HCT116 (cell line): ENCODE measurements at regions of chr14 and their contacts with region 1.

Region 1: DNA sequence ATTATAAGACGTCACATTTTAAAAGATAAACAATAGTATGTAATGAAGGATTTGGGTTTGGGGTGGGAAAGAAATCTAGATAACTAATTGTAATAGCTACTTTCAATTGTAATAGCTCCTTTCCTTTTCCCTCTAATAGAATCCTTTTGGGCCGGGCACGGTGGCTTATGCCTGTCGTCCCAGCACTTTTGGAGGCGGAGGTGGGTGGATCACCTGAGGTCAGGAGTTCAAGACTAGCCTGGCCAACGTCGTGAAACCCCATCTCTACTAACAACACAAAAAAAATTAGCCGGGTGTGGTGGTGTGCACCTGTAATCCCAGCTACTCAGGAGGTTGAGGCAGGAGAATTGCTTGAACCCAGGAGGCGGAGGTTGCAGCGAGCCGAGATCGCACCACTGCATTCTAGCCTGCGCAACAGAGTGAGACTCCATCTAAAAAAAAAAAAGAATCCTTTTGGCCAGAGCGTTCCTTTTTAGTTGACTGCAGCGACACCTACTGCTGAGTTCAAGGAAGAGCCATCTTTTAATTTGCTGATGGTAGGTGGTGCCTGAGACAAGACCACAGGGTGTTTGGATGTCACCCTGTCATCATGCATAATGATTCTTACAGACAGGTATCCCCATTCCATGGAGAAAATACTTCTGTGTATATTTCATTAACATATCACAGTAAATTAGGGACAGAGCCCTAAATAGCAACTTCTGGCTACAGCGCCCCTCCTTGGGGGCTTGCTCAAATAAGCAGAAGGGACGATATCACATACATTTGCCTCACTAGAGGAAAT is 79.5 kb downstream of the ARMH4 start:
- DNase-seq: peak; percentile 65
- ATAC-seq: peak; percentile 96
- H3K4me3 ChIP-seq: peak overlapping the region; percentile 18 to 32; a peak in 2 of 4 replicates
- H3K27ac ChIP-seq: no peak overlapping the region
- H3K4me1 ChIP-seq: no peaks in the 10 kb centered on the region
- H3K27me3 ChIP-seq: no peaks in the 10 kb centered on the region
- CTCF ChIP-seq: peak; percentile 63 to 73 (median 63); a peak in 5 of 6 replicates
- POLR2A ChIP-seq: no peak
- RAD21 ChIP-seq: peak; percentile 75

Region 2: DNA sequence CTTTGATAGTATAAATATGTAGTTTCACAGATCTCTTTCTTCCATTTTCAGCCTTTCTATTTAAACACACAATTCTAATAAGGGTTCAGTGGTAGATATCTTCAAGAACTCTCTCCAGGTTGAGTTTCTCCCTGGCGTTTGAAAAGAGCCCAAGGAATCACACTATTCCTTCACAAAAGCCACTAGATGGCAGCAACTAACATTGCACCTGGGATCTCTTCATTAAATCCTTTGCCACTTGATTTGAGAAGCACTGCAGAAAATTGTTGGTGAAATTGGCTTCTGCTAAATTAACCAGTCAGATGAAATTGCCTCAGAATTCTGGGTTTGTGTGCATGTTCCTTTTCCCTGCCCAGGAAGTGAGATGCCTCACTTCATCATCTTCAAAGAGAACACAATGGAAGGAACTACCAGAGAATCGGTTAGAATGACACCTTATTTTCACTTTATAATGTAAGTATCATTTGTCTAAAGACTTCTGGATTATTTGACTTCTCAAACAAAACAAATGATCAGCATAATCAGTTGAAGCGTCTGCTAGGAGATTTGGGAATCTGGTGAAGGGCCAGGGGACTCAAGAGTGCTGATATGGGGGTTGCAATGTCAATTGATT is 585.6 kb before region 1 on chr14:
- CTCF ChIA-PET with region 1: no interaction called
- POLR2A ChIA-PET with region 1: no interaction called
- RAD21 ChIA-PET with region 1: no interaction called
- intact Hi-C with region 1: loop called (anchors 2 kb)
- DNase-seq: peak; percentile 18
- ATAC-seq: peak; percentile 72
- H3K4me3 ChIP-seq: no peak overlapping the region
- H3K27ac ChIP-seq: no peak overlapping the region
- H3K4me1 ChIP-seq: no peaks in the 10 kb centered on the region
- H3K27me3 ChIP-seq: peaks cover 72% of the 10 kb centered on the region
- CTCF ChIP-seq: peak; percentile 47 to 69 (median 64); a peak in 5 of 6 replicates
- POLR2A ChIP-seq: no peak
- RAD21 ChIP-seq: peak; percentile 61

Region 3: GRCh38 chr14:57692671-57693070 is 379.8 kb before region 1 on chr14:
- CTCF ChIA-PET with region 1: interaction called, 6 read pairs
- POLR2A ChIA-PET with region 1: no interaction called
- RAD21 ChIA-PET with region 1: no interaction called
- intact Hi-C with region 1: loop called (anchors 2 kb)
- DNase-seq: peak; percentile 49
- ATAC-seq: peak; percentile 81
- H3K4me3 ChIP-seq: no peak overlapping the region
- H3K27ac ChIP-seq: no peak overlapping the region
- H3K4me1 ChIP-seq: no peaks in the 10 kb centered on the region
- H3K27me3 ChIP-seq: peaks cover 11% of the 10 kb centered on the region; the same call in 1 of the 2 replicates
- CTCF ChIP-seq: peak; percentile 59 to 70 (median 64)
- POLR2A ChIP-seq: no peak
- RAD21 ChIP-seq: peak; percentile 73

Region 4: DNA sequence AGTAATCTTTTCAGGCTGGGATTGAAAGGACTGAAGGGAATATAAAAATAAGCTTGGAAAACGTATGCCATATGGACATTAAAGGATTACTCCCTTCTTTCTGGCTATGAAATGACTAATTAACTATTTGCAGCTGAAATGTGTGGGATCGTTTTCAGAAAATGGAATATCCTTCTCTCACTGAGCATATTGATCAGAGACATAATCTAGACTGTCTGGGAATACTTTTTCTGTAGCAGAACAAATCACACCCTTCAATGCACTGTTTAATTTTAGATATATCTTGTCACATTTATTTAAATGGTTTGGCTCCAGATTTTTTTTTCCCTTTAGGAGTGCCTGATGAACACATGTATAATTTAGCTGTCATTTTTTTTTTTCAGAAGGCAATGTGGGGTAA is 116.7 kb after region 1 on chr14:
- CTCF ChIA-PET with region 1: no interaction called
- POLR2A ChIA-PET with region 1: no interaction called
- RAD21 ChIA-PET with region 1: no interaction called
- intact Hi-C with region 1: no loop called
- DNase-seq: no peak
- ATAC-seq: no peak
- H3K4me3 ChIP-seq: no peak overlapping the region
- H3K27ac ChIP-seq: no peak overlapping the region
- H3K4me1 ChIP-seq: no peaks in the 10 kb centered on the region
- H3K27me3 ChIP-seq: no peaks in the 10 kb centered on the region
- CTCF ChIP-seq: no peak
- POLR2A ChIP-seq: no peak
- RAD21 ChIP-seq: no peak

Region 5: GRCh38 chr14:59075506-59075905 is 1003.0 kb after region 1 on chr14:
- CTCF ChIA-PET with region 1: no interaction called
- POLR2A ChIA-PET with region 1: no interaction called
- RAD21 ChIA-PET with region 1: no interaction called
- intact Hi-C with region 1: no loop called
- DNase-seq: no peak
- ATAC-seq: no peak
- H3K4me3 ChIP-seq: no peak overlapping the region
- H3K27ac ChIP-seq: no peak overlapping the region
- H3K4me1 ChIP-seq: no peaks in the 10 kb centered on the region
- H3K27me3 ChIP-seq: no peaks in the 10 kb centered on the region
- CTCF ChIP-seq: no peak
- POLR2A ChIP-seq: no peak
- RAD21 ChIP-seq: no peak